IMR-90 (cell line): ENCODE measurements at regions of chr10 and their contacts with region 1.

Region 1: DNA sequence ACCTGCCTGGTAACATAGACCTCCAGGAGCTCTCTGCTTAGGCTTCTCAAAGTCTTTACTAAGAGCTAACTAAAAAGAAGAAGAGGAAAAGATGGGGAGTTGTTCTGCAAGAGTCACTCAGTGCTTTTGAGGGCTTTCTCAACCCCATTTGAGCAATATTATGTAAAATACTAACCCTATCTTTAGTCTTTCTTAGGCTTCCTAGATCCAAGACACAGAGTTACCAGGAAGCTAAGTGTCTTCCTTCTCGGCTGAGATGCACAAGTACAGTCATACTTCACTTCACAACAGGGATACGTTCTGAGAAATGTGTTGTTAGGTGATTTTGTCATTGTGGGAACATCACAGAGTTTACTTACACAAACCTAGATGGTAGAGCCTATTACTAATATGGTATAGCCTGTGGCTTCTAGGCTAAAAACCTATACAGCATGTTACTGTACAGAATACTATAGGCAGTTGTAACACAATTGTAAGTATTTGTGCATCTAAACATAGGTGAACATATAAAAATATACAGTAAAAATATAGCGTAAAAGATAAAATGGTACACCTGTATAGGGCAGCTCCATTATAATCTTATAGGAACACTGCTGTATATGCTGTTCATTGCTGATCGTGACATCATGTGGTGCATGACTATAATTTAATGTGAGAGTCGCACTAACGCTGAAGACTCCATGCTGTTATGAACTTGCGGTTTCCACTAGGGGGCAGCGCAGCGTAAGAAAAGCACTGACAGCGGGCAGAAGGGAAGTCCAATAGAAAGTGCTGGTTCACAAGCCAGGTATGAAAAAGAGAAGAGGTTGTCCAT is 16.3 kb downstream of the ANKRD22 start:
- DNase-seq: peak; percentile 89
- ATAC-seq: peak; percentile 98
- H3K4me3 ChIP-seq: no peak overlapping the region
- H3K27ac ChIP-seq: no peak overlapping the region
- H3K4me1 ChIP-seq: no peaks in the 10 kb centered on the region
- H3K27me3 ChIP-seq: no peaks in the 10 kb centered on the region
- CTCF ChIP-seq: peak; percentile 96
- POLR2A ChIP-seq: peak; percentile 38
- RAD21 ChIP-seq: peak; percentile 99

Region 2: DNA sequence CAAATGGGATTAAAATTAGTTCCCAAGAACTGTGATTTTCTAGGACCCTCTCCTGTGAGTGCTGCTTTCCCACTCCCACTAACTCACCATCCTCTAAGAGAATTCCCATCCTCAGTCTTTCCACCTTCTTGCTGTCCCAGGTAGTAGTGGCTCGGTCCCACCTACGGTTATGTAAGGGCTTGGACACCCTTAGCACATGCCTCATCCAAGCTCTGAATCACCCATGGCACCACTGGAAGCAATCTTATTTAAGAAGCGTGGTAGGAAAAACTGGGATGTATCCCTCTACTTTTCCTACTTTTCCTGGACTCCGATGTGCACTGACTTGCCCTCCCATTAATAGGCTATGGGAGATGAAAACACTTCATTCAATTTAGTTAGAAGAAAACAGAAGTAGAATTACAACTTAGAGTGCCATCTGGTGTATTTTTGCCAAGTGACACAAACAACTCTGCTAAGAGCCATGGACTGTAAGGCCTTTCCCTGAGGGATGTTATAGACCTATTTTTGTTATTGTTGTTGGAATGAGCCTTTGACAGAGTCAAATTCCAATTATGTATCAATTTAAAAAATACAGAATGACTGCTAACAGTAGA is 30.1 kb after region 1 on chr10:
- CTCF ChIA-PET with region 1: interaction called, 5 read pairs
- POLR2A ChIA-PET with region 1: no interaction called
- dilution Hi-C with region 1: no loop called
- in situ Hi-C with region 1: no loop called
- intact Hi-C with region 1: loop called (anchors 1 kb)
- DNase-seq: no peak
- ATAC-seq: peak; percentile 70; the same call in 1 of the 2 replicates
- H3K4me3 ChIP-seq: no peak overlapping the region
- H3K27ac ChIP-seq: no peak overlapping the region
- H3K4me1 ChIP-seq: no peaks in the 10 kb centered on the region
- H3K27me3 ChIP-seq: peaks cover 7% of the 10 kb centered on the region
- CTCF ChIP-seq: peak; percentile 31
- POLR2A ChIP-seq: no peak
- RAD21 ChIP-seq: 0 out of 2 replicates have a peak, but pooled peaks have one; percentile 15

Region 3: GRCh38 chr10:89224739-89225443 is 389.6 kb after region 1 on chr10:
- CTCF ChIA-PET with region 1: no interaction called
- POLR2A ChIA-PET with region 1: no interaction called
- dilution Hi-C with region 1: no loop called
- in situ Hi-C with region 1: loop called (anchors 10 kb)
- intact Hi-C with region 1: no loop called
- DNase-seq: no peak
- ATAC-seq: no peak
- H3K4me3 ChIP-seq: no peak overlapping the region
- H3K27ac ChIP-seq: no peak overlapping the region
- H3K4me1 ChIP-seq: no peaks in the 10 kb centered on the region
- H3K27me3 ChIP-seq: no peaks in the 10 kb centered on the region
- CTCF ChIP-seq: no peak
- POLR2A ChIP-seq: no peak
- RAD21 ChIP-seq: no peak